ENCODE measurements at regions of chr1 and their contacts with region 1.

Region 1: GRCh38 chr1:244796718-244797406 is 38.6 kb upstream of the COX20 start:
- DNase-seq: peak; percentile 68
- ATAC-seq: peak; percentile 83
- H3K4me3 ChIP-seq: no peak overlapping the region
- H3K27ac ChIP-seq: no peak overlapping the region
- H3K4me1 ChIP-seq: peaks cover 3% of the 10 kb centered on the region
- H3K27me3 ChIP-seq: no peaks in the 10 kb centered on the region
- CTCF ChIP-seq: peak; percentile 86
- POLR2A ChIP-seq: no peak
- RAD21 ChIP-seq: peak; percentile 85

Region 2: GRCh38 chr1:244599937-244600350 is 196.9 kb before region 1 on chr1:
- CTCF ChIA-PET with region 1: interaction called, 25 read pairs
- POLR2A ChIA-PET with region 1: no interaction called
- dilution Hi-C with region 1: no loop called
- in situ Hi-C with region 1: loop called (anchors 5 kb)
- intact Hi-C with region 1: loop called (anchors 1 kb)
- DNase-seq: peak; percentile 98
- ATAC-seq: peak; percentile 98
- H3K4me3 ChIP-seq: peak overlapping the region; percentile 60
- H3K27ac ChIP-seq: peak overlapping the region; percentile 73; the same call in 1 of the 2 replicates
- H3K4me1 ChIP-seq: peaks cover 5% of the 10 kb centered on the region
- H3K27me3 ChIP-seq: peaks cover 7% of the 10 kb centered on the region; the same call in 1 of the 2 replicates
- CTCF ChIP-seq: no peak
- POLR2A ChIP-seq: peak; percentile 81
- RAD21 ChIP-seq: no peak

Region 3: DNA sequence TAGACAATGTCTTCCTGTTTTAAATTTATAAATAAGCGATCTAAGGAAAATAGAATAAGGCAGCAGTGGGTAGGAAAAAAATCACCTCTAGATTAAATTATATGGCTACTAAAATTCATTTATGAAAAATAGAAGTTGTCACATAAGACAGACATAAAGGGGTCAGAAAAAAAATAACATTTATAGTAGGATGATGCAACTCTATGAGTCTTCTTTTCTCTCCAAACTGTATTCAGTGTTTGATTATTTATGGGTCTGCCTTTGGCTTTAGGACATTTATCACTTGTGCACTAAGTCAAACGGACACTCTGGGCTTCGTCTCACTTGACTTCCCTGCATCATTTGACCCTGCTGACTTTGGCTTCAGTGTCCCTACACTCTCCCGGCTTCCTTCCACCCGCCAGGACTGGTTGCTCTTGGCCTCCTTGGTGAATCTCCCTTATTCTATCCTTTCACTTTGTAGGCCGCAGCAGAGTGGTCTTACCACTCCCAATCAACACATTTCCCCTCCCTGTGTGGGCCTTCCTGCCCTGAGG is 191.0 kb before region 1 on chr1:
- CTCF ChIA-PET with region 1: interaction called, 25 read pairs
- POLR2A ChIA-PET with region 1: no interaction called
- dilution Hi-C with region 1: no loop called
- in situ Hi-C with region 1: loop called (anchors 5 kb)
- intact Hi-C with region 1: loop called (anchors 1 kb)
- DNase-seq: no peak
- ATAC-seq: no peak
- H3K4me3 ChIP-seq: no peak overlapping the region
- H3K27ac ChIP-seq: no peak overlapping the region
- H3K4me1 ChIP-seq: peaks cover 3% of the 10 kb centered on the region; the same call in 1 of the 2 replicates
- H3K27me3 ChIP-seq: peaks cover 7% of the 10 kb centered on the region
- CTCF ChIP-seq: no peak
- POLR2A ChIP-seq: no peak
- RAD21 ChIP-seq: no peak

Region 4: GRCh38 chr1:245587435-245588115 is 790.7 kb after region 1 on chr1:
- CTCF ChIA-PET with region 1: no interaction called
- POLR2A ChIA-PET with region 1: no interaction called
- dilution Hi-C with region 1: no loop called
- in situ Hi-C with region 1: no loop called
- intact Hi-C with region 1: no loop called
- DNase-seq: no peak
- ATAC-seq: no peak
- H3K4me3 ChIP-seq: no peak overlapping the region
- H3K27ac ChIP-seq: no peak overlapping the region
- H3K4me1 ChIP-seq: peaks cover 5% of the 10 kb centered on the region
- H3K27me3 ChIP-seq: no peaks in the 10 kb centered on the region; the same call in 1 of the 2 replicates
- CTCF ChIP-seq: no peak
- POLR2A ChIP-seq: no peak
- RAD21 ChIP-seq: no peak

Measured in IMR-90 (cell line).